Gastrocnemius medialis (tissue), 4 donors: ENCODE measurements at regions of chr7 and their contacts with region 1.

Region 1: GRCh38 chr7:71237945-71238344 is 106.0 kb downstream of the GALNT17 start:
- DNase-seq: peak in 1 of 2 donors; percentile 15
- ATAC-seq: peak; percentile 29 to 36
- H3K4me3 ChIP-seq: no peak overlapping the region
- H3K27ac ChIP-seq: peak overlapping the region; percentile 68 to 84 (median 77)
- H3K4me1 ChIP-seq: peaks cover 26 to 48% of the 10 kb centered on the region in 2 donors
- H3K27me3 ChIP-seq: no peaks in the 10 kb centered on the region
- CTCF ChIP-seq: no peak
- POLR2A ChIP-seq: no peak

Region 2: DNA sequence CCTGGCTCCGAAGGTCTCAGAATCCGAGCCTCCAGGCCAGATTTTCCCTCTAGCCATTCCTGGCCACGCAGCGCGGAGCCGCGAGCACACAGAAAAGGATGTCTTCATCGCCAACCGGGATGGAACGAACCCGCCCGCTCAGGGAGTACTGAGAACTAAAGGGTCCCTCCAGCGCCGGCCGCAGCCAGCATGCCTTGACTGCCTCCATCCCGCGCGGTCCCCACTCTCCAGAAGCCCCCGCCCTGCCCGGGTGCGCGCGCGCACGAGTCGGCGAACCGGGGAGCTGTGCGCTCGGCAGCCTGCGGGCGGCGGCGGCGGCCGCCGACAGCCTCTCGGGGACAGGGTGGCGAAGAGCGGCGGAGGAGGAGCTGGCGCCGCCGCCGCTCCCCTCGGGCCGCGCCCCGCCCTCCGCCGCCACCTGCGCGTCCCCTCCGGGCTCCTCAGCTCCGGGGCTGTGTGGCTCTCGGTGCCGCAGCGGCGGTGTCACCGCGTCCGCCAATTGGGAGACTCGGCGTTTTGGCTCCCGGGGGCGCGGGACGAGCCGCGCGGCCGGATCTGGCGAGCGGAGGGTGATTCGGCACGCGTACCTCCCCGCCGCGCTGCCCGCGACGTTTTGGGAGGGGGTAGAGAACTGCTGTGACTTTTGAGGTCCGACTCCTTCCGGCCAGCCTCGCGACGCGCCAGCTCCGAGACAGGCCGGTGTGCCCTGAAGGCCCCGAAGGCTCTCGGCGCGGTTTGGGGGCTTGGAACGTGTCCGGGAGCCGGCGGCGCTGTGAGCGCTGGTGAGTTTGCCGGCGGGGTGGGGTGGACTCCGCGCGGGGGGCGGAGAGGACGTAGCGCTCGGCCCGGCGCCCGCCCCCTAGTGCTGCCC is 106.5 kb before region 1 on chr7:
- in situ Hi-C with region 1: no loop called
- intact Hi-C with region 1: loop called (anchors 2 kb)
- DNase-seq: no peak
- ATAC-seq: peak; percentile 52 to 56
- H3K4me3 ChIP-seq: peak overlapping the region; percentile 42 to 68 (median 54)
- H3K27ac ChIP-seq: peak overlapping the region in 2 of 4 donors; percentile 45 to 64
- H3K4me1 ChIP-seq: no peaks in the 10 kb centered on the region
- H3K27me3 ChIP-seq: peaks cover 0 to 20% (median 0%) of the 10 kb centered on the region in 3 donors
- CTCF ChIP-seq: peak in 2 of 5 experiments; percentile 10 to 33
- POLR2A ChIP-seq: peak; percentile 31 to 36

Region 3: DNA sequence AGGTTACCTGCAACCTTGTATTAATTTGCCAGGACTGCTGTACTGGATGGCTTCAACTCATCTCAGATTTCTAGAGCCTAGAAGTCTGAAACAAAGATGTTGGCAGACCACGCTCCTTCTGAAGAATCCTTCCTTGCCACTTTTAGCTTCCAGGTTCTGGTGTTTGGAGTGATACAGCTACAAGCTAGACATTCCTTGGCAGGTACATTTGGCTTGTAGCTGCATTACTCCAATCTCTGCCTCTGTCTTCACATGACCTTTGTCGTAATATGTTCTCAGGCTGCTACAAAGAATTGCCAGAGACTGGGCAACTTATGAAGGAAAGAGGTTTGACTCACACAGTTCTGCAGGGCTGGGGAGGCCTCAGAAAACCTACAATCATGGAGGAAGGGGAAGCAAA is 40.3 kb after region 1 on chr7:
- in situ Hi-C with region 1: no loop called
- intact Hi-C with region 1: loop called (anchors 5 kb)
- DNase-seq: no peak
- ATAC-seq: peak; percentile 53 to 63
- H3K4me3 ChIP-seq: no peak overlapping the region
- H3K27ac ChIP-seq: no peak overlapping the region
- H3K4me1 ChIP-seq: peaks cover 0 to 3% of the 10 kb centered on the region in 2 donors
- H3K27me3 ChIP-seq: no peaks in the 10 kb centered on the region
- CTCF ChIP-seq: no peak
- POLR2A ChIP-seq: no peak

Region 4: GRCh38 chr7:71308096-71308495 is 70.2 kb after region 1 on chr7:
- in situ Hi-C with region 1: no loop called
- intact Hi-C with region 1: loop called (anchors 10 kb)
- DNase-seq: peak; percentile 25 to 58
- ATAC-seq: peak; percentile 83 to 93
- H3K4me3 ChIP-seq: no peak overlapping the region
- H3K27ac ChIP-seq: peak overlapping the region in 2 of 4 donors; percentile 54 to 65
- H3K4me1 ChIP-seq: peaks cover 12 to 13% of the 10 kb centered on the region in 2 donors
- H3K27me3 ChIP-seq: no peaks in the 10 kb centered on the region
- CTCF ChIP-seq: no peak
- POLR2A ChIP-seq: no peak

Region 5: DNA sequence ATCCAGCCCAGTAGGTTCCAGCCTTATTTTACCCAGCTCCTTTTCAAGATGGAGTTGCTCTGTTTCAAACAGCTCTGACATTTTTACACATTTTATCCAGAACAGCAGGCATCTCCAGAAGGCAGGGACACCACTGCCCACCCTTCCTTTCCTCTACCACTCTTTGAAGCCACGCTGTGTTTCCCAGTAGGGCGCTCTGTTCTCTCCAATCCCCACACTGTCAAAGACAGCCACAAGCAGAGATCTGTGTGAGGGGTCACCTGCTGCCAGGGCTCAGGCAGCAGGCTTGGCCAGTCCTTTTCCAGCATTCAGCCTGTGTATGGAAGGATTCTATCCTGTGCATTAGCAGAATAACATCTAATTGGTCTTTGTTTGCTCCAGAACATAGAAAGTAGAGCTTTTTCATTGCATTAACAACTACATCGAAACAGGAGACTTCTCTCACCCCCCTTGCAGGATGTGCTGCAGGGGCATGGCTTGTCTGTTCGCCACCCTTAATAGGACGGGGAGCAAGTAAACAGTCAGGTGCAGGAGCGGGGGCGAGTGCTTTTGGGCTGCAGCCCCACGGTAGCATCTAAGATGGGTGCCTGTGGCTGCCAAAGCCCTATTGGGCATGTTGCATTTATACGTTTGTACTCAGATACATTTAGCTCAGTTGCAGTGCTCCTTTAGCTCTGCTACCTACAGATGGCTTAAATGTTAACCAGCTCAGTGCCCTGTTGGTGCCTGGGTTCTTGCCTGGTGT is 220.1 kb after region 1 on chr7:
- in situ Hi-C with region 1: no loop called
- intact Hi-C with region 1: loop called (anchors 2 kb)
- DNase-seq: no peak
- ATAC-seq: no peak
- H3K4me3 ChIP-seq: no peak overlapping the region
- H3K27ac ChIP-seq: no peak overlapping the region
- H3K4me1 ChIP-seq: peaks cover 18 to 26% of the 10 kb centered on the region in 2 donors
- H3K27me3 ChIP-seq: no peaks in the 10 kb centered on the region
- CTCF ChIP-seq: no peak
- POLR2A ChIP-seq: no peak

Region 6: GRCh38 chr7:71733107-71733870 is 495.3 kb after region 1 on chr7:
- in situ Hi-C with region 1: no loop called
- intact Hi-C with region 1: loop called (anchors 5 kb)
- DNase-seq: peak; percentile 34 to 50
- ATAC-seq: peak; percentile 55 to 60
- H3K4me3 ChIP-seq: no peak overlapping the region
- H3K27ac ChIP-seq: no peak overlapping the region
- H3K4me1 ChIP-seq: peaks cover 0 to 3% of the 10 kb centered on the region in 2 donors
- H3K27me3 ChIP-seq: no peaks in the 10 kb centered on the region
- CTCF ChIP-seq: peak; percentile 58 to 89 (median 87)
- POLR2A ChIP-seq: no peak